MCF 10A (cell line): ENCODE measurements at regions of chr17 and their contacts with region 1.

Region 1: GRCh38 chr17:76623271-76624146 is 20.0 kb downstream of the ST6GALNAC1 start:
- DNase-seq: peak; percentile 65
- H3K4me3 Mint-ChIP-seq: no peak overlapping the region
- H3K27ac Mint-ChIP-seq: no peak overlapping the region
- H3K4me1 Mint-ChIP-seq: peaks cover 14% of the 10 kb centered on the region
- H3K27me3 Mint-ChIP-seq: no peaks in the 10 kb centered on the region
- CTCF ChIP-seq: peak; percentile 92

Region 2: GRCh38 chr17:76523084-76524037 is 100.1 kb before region 1 on chr17:
- CTCF ChIA-PET with region 1: interaction called, 45 read pairs
- POLR2A ChIA-PET with region 1: interaction called, 7 read pairs
- intact Hi-C with region 1: loop called (anchors 1 kb)
- DNase-seq: peak; percentile 67
- H3K4me3 Mint-ChIP-seq: no peak overlapping the region
- H3K27ac Mint-ChIP-seq: no peak overlapping the region
- H3K4me1 Mint-ChIP-seq: peaks cover 11% of the 10 kb centered on the region
- H3K27me3 Mint-ChIP-seq: peaks cover 25% of the 10 kb centered on the region
- CTCF ChIP-seq: peak; percentile 99

Region 3: DNA sequence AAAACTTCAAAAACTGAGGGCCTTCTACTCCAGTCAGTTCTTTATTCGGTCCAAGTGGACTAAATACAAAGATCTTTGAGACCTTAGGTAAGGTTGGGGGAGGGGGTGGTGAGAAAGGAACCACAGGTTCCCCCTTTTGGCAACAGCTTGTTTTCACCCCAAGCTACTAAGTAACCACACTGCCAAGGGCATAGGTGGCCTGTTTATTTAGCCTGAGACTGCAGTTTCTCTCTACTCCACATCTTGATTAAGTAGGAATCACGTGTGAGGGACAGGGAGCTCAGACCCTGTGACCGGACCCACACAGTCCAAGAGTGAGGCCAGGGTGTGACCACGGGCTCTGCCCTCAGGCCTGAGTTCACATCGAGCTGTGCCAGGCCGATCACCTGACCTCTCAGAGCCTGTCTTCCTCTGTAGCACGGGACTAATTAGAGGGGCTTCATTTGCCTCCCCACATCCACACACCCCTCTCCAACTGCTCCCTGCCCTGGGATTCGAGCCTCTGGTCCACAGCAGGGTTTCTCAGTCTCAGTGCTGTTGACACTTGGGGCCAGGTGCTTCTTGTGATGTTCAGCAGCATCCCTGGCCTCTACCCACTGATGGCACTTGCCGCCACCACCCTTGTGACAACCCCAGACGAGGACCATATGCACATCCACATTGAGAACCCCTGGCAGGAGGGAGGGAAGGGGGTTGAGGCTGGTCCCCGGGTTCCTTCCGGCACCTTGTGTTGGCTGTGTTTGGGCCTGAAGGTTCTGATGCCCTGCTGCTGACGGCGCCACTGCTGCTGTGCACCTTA is 55.7 kb before region 1 on chr17:
- CTCF ChIA-PET with region 1: interaction called, 4 read pairs
- POLR2A ChIA-PET with region 1: interaction called, 24 read pairs
- intact Hi-C with region 1: no loop called
- DNase-seq: peak; percentile 35
- H3K4me3 Mint-ChIP-seq: no peak overlapping the region
- H3K27ac Mint-ChIP-seq: peak overlapping the region; percentile 50
- H3K4me1 Mint-ChIP-seq: peaks cover 27% of the 10 kb centered on the region
- H3K27me3 Mint-ChIP-seq: no peaks in the 10 kb centered on the region
- CTCF ChIP-seq: no peak

Region 4: DNA sequence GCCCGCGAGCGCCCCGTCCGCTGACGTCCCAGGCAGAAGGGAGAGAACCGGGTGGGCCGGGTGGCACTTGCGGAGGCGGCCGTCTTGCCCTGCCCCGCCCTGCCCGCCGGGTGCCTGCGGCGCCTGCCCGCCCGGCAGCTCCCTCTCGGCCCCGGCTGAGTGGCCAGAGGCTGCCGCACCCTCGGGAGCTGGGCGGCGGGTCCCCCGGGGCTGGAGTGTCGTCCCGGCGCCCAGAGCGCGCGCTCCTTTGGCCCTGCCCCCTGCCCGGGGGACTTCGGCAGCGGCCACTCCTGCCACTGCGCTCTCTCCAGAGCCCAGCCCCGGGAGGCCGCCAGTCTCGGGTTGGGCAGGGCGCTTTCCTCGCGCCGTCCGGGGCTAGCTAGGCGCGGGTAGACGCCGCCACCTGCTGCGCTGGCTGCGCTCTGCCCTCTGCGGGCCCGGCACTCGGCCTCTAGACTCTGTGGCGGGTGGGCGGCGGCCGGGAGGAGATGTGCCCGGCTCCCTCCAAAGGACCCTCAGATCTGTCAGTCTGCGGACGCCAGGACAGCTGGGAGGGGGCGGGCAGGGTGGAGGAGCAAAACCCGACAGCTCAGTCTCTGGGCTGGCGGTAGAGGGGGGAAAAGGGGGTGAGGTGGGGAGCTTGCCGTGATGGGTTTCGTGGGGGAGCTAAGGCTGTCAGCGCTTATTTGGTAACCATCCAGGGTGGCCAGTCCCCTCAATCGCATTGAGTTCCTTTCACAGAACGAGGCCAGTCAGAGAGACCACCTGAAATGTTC is 37.5 kb before region 1 on chr17 and contains the start of gene ST6GALNAC2:
- CTCF ChIA-PET with region 1: interaction called, 14 read pairs
- POLR2A ChIA-PET with region 1: interaction called, 8 read pairs
- intact Hi-C with region 1: no loop called
- DNase-seq: peak; percentile 72
- H3K4me3 Mint-ChIP-seq: peak within 1 kb of the TSS; percentile 74
- H3K27ac Mint-ChIP-seq: no peak within 1 kb of the TSS
- H3K4me1 Mint-ChIP-seq: peaks cover 11% of the 10 kb centered on the region
- H3K27me3 Mint-ChIP-seq: no peaks in the 10 kb centered on the region
- CTCF ChIP-seq: peak; percentile 58
- total RNA-seq, gene ST6GALNAC2: 5.0 and 7.7 TPM in 2 replicates

Region 5: DNA sequence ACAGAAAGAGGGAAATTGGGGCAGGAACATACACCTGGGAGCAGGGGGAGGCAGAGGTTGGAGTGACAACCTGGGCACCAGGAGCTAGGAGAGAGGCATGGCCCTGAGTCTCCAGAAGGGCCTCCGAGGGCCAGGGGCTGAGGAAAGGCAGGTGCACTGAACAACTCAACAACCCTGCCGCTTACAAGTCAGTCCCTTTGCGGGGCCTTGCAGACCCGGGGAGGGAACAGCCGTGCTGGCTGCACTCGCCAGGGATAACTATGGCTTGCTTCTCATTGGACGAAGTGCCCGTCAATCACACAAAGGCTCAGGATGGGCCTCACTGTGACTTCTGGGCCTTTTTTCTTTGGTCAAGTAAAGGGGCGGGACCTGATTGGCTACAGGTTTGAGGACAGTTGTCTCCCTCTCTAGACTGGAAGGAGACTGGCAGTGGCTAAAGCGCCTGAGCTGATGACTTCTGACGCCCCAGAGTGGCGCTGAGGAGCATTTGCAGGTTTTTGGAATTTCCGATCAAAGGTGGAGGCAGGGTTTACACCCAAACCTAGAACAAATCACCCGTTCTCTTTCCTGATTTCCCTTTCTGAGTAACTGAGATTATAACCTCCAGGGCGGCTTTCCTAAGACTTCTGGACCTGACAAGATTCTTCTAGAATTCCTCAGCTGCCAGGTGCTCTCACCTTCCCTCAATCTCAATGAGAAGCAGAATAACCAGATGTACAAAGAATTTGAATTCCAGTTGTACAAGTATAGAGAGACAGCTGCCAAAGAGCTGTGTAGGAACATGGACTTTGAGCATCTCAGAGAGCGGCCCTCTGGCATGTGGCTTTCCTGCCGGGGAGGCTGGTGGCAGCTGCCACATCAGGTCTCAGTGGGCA is 10.3 kb before region 1 on chr17:
- CTCF ChIA-PET with region 1: interaction called, 16 read pairs
- POLR2A ChIA-PET with region 1: interaction called, 17 read pairs
- intact Hi-C with region 1: no loop called
- DNase-seq: peak; percentile 94
- H3K4me3 Mint-ChIP-seq: no peak overlapping the region
- H3K27ac Mint-ChIP-seq: no peak overlapping the region
- H3K4me1 Mint-ChIP-seq: peaks cover 11% of the 10 kb centered on the region
- H3K27me3 Mint-ChIP-seq: no peaks in the 10 kb centered on the region
- CTCF ChIP-seq: peak; percentile 14